ENCODE measurements at regions of chr16 and their contacts with region 1.

Region 1: DNA sequence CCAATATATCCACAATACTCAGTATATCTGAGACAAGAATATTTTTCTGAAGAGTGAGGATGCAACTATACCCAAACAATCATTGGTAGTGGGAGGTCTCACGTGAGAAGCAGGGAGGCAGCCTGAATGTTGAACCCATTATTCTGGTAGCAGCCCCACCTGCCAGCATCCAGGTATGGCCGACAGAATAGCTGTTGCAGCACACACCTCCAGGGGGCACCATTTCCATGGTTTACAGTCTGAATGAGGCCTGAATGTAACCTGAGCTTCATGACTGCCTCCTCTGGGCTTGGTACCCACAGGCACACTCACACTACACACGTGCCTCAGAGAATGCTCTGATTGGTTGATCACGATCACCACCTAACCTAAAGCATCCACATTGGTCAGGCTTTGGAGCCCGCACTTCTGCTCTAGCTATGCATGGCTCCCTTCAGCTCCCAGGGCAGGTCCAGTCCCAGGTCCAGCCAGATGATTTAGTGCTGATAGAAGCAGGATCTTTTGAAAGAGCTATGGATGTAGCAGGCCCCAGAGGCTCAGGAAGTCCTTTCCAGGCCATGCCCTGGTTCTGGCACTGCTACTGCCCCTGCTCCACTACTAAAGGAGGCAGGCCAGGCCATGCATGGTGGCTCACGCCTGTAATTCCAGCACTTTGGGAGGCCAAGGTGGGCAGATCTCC is 11.0 kb upstream of the CBFB start:
- DNase-seq: peak; percentile 95
- ATAC-seq: peak; percentile 97
- H3K4me3 Mint-ChIP-seq: no peak overlapping the region
- H3K27ac Mint-ChIP-seq: no peak overlapping the region
- H3K4me1 Mint-ChIP-seq: peaks cover 17% of the 10 kb centered on the region
- H3K27me3 Mint-ChIP-seq: peaks cover 2% of the 10 kb centered on the region

Region 2: DNA sequence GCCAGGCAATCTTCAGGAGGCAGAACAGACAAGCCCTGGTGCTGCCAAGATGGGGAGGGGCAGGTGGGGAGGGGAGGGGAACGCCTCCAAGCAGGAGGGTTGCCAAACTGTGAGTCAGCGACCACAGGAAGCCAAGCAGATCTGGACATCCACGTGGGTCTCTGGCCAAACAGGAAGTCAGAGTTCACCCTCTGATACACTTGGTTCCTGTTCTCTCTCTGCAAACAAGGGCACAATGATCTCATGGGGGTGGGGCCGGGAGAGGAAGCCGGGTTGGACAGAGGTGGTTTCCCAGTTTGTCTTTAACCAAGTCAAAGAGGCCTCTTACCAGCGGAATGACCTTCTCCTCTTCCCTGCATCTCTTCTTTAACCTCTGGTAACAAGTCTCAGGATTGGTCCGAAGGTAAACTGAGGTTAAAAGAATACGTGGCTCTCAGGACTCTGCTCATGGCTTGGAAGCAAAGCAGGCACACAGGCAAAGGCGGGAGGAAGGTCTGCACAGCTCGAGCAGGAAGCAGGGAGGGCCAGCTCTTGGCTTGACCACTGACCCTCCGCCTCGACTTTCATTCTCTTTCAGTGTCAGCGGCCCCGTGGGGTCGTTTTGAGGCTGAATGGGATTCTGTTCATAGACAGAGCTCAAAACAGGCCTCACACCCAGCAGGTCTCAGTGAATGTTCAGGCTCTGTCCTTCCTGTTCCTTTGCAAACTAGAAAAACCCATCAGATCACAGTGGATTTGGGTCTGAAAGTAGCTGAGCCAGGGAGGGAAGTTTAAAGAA is 501.0 kb before region 1 on chr16:
- CTCF ChIA-PET with region 1: no interaction called
- POLR2A ChIA-PET with region 1: no interaction called
- intact Hi-C with region 1: no loop called
- DNase-seq: peak; percentile 91
- ATAC-seq: peak; percentile 90
- H3K4me3 Mint-ChIP-seq: peak overlapping the region; percentile 65
- H3K27ac Mint-ChIP-seq: peak overlapping the region; percentile 92
- H3K4me1 Mint-ChIP-seq: peaks cover 66% of the 10 kb centered on the region
- H3K27me3 Mint-ChIP-seq: no peaks in the 10 kb centered on the region

Region 3: DNA sequence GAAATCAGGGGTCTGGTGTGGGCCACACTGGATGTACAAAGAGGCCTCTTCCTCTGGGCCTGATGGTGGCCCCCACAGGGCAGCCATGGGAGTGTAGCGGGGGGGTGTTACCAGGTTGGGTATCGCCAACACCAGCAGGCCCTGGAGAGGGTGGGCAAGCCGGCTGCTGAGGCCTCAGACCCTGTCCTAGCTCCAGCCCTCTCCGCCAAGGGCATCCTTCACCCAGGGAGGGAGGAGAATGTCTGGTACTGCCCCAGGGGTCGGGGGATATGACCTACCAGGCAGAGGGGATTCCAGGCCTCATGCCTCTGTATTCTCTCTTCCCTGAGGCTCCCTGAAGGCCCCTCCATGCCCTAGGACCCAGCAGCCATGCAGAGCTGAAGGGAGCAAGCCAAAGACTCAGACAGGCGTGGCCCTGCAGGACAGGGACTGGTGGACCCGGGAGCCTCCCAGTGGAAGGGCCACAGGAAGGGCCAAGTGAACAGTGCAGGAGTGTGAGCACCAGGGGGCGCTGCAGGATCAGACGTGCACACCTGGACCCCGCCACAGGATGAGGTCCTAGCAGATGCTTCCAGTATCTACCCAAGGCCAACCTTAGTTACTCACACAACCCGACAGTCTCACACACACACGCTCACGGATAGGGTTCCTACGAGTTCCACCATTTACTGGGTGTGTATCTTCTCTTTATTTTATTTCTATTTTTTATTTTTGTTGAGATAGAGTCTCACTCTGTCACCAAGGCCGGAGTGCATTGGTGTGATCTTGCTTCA is 40.4 kb before region 1 on chr16:
- CTCF ChIA-PET with region 1: interaction called, 11 read pairs
- POLR2A ChIA-PET with region 1: no interaction called
- intact Hi-C with region 1: loop called (anchors 1 kb)
- DNase-seq: peak; percentile 96
- ATAC-seq: peak; percentile 97
- H3K4me3 Mint-ChIP-seq: no peak overlapping the region
- H3K27ac Mint-ChIP-seq: peak overlapping the region; percentile 31
- H3K4me1 Mint-ChIP-seq: peaks cover 31% of the 10 kb centered on the region
- H3K27me3 Mint-ChIP-seq: peaks cover 3% of the 10 kb centered on the region

Region 4: DNA sequence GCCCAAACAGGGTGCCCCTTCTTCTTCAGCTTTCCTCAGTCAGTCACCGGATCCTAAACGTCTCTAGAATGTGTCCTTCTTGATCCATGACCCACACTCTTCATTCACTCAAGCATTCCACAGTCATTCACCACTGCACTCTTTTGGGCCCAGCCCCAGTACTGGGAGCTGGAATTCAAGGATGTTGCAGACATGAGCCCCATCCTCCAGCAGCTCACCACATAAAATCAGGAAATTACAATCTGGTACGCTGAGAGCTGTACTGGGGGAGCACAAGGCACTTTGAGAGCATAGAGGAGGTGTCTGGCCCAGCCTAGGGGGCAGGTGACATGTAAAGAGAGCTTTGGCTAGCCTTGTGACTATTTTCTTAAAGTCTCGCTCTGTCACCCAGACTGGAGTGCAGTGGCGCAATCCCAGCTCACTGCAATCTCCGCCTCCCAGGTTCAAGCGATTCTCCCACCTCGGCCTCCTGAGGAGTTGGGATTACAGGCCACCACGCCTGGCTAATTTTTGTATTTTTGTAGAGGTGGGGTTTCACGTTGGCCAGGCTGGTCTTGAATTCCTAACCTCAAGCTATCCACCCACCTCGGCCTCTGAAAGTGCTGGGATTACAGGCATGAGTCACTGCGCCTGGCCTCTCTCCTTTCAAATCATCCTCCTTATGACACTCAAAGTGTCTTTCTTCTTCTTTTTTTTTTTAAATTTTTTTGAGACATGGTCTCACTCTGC is 10.9 kb before region 1 on chr16:
- CTCF ChIA-PET with region 1: interaction called, 14 read pairs
- POLR2A ChIA-PET with region 1: interaction called, 3 read pairs
- intact Hi-C with region 1: no loop called
- DNase-seq: no peak
- ATAC-seq: peak; percentile 37
- H3K4me3 Mint-ChIP-seq: no peak overlapping the region
- H3K27ac Mint-ChIP-seq: no peak overlapping the region
- H3K4me1 Mint-ChIP-seq: peaks cover 5% of the 10 kb centered on the region
- H3K27me3 Mint-ChIP-seq: no peaks in the 10 kb centered on the region

Region 5: DNA sequence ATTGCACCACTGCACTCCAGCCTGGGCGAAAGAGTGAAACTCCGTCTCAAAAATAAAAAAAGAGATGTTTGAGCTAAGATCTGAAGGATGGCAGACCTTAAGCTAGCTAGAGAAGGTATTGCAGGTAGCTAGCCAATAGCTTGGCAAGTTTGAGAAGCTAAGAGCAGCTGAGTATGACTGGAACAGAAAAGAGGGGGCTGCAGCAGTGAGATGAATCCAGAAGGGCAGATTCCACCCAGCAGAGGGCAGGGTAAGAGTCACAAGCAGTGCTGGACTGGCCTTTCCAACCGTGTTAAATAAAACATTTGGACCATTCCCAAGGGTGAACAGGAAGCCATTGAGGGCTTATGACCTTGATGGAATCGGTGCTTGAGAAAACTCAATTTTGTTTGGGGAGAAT is 86.1 kb after region 1 on chr16:
- CTCF ChIA-PET with region 1: interaction called, 40 read pairs
- POLR2A ChIA-PET with region 1: interaction called, 3 read pairs
- intact Hi-C with region 1: loop called (anchors 1 to 2 kb)
- DNase-seq: peak; percentile 16
- ATAC-seq: peak; percentile 42
- H3K4me3 Mint-ChIP-seq: no peak overlapping the region
- H3K27ac Mint-ChIP-seq: no peak overlapping the region
- H3K4me1 Mint-ChIP-seq: peaks cover 5% of the 10 kb centered on the region
- H3K27me3 Mint-ChIP-seq: no peaks in the 10 kb centered on the region

Region 6: GRCh38 chr16:67159593-67160406 is 141.9 kb after region 1 on chr16 and contains the starts of genes FBXL8 and TRADD:
- CTCF ChIA-PET with region 1: interaction called, 64 read pairs
- POLR2A ChIA-PET with region 1: interaction called, 5 read pairs
- intact Hi-C with region 1: loop called (anchors 1 kb)
- DNase-seq: peak; percentile 88
- ATAC-seq: peak; percentile 63
- H3K4me3 Mint-ChIP-seq: peak within 1 kb of the TSS; percentile 91
- H3K27ac Mint-ChIP-seq: peak within 1 kb of the TSS; percentile 93
- H3K4me1 Mint-ChIP-seq: peaks cover 48% of the 10 kb centered on the region
- H3K27me3 Mint-ChIP-seq: peaks cover 12% of the 10 kb centered on the region
- total RNA-seq, gene FBXL8: 15.5 to 21.0 TPM
- total RNA-seq, gene TRADD: 22.0 to 34.0 TPM

Measured in activated CD4-positive, alpha-beta T cell treated with anti-CD3 and anti-CD28 coated beads for 36 hours (primary cell).